OCI-LY7 (cell line): ENCODE measurements at regions of chr2 and their contacts with region 1.

Region 1: GRCh38 chr2:88049622-88050021 is 6.0 kb downstream of the KRCC1 start:
- DNase-seq: no peak
- H3K4me3 ChIP-seq: no peak overlapping the region
- H3K27ac ChIP-seq: no peak overlapping the region
- H3K4me1 ChIP-seq: peaks cover 18% of the 10 kb centered on the region
- CTCF ChIP-seq: no peak

Region 2: DNA sequence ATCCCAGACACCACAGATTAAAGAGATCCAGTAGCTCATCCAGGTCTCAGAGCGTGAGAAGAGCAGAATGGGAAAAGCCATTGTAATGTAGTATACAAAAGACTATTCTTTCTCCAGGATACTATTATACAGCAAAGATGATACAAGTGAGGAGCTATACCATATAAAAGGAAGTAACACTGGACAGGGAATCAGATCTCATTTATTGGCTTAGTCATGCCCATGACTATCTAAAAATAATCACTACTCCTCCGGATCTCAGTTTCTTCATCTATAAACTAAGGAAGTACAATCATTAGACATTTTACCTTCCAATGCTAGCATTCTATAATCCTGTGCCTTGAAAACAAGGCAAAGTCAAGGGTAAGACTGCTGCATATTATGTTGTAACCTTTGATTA is 13.4 kb before region 1 on chr2:
- CTCF ChIA-PET with region 1: no interaction called
- POLR2A ChIA-PET with region 1: interaction called, 12 read pairs
- intact Hi-C with region 1: no loop called
- DNase-seq: no peak
- H3K4me3 ChIP-seq: no peak overlapping the region
- H3K27ac ChIP-seq: no peak overlapping the region
- H3K4me1 ChIP-seq: no peaks in the 10 kb centered on the region
- CTCF ChIP-seq: no peak

Region 3: DNA sequence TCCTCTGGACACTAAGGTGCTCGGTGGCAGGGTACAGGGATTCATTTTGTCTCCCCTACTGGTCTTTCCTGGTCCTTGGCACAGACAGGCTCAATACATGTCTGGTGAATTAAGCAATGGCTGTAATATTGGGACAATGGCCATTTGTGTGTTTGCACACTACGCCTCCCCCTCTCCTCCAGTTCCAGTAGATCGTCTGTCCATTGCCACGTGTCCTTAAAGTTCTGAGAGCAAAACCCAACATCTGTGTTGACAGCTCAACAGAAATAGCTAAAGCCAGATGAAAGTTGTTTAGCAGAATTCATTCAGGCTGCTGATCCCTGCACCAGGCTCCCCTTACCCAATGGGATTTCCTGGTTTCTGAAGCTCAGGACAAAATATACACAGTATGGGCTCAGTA is 87.2 kb after region 1 on chr2:
- CTCF ChIA-PET with region 1: no interaction called
- POLR2A ChIA-PET with region 1: no interaction called
- intact Hi-C with region 1: no loop called
- DNase-seq: no peak
- H3K4me3 ChIP-seq: no peak overlapping the region
- H3K27ac ChIP-seq: no peak overlapping the region
- H3K4me1 ChIP-seq: no peaks in the 10 kb centered on the region
- CTCF ChIP-seq: no peak

Region 4: DNA sequence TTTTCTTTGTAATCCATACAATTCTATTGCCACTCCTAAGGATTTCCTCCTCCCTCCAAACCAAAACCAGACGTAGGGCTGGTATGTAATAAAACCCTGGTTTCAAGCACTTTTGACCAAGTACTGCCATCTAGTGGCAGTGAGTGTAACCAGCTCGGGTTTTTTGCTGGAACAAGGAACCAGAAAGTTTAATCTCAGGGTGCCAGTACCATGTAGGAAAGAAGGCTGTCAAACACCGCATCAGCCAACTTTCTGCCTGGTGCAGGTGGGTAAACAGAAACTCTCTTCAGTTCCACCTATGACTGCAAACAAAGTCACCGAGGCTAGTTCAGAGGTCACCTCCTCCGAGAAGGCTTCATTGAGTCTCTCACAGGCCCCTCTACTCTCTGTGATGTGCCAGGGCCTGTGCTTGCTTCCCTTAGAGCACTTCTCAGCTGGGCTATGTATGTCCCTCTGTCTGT is 110.4 kb after region 1 on chr2:
- CTCF ChIA-PET with region 1: no interaction called
- POLR2A ChIA-PET with region 1: no interaction called
- intact Hi-C with region 1: no loop called
- DNase-seq: peak; percentile 72
- H3K4me3 ChIP-seq: no peak overlapping the region
- H3K27ac ChIP-seq: no peak overlapping the region
- H3K4me1 ChIP-seq: no peaks in the 10 kb centered on the region
- CTCF ChIP-seq: peak; percentile 95

Region 5: GRCh38 chr2:89000235-89000634 is 950.6 kb after region 1 on chr2:
- CTCF ChIA-PET with region 1: no interaction called
- POLR2A ChIA-PET with region 1: no interaction called
- intact Hi-C with region 1: no loop called
- DNase-seq: no peak
- H3K4me3 ChIP-seq: no peak overlapping the region
- H3K27ac ChIP-seq: no peak overlapping the region
- H3K4me1 ChIP-seq: no peaks in the 10 kb centered on the region
- CTCF ChIP-seq: no peak